ENCODE measurements at regions of chr15 and their contacts with region 1.

Region 1: DNA sequence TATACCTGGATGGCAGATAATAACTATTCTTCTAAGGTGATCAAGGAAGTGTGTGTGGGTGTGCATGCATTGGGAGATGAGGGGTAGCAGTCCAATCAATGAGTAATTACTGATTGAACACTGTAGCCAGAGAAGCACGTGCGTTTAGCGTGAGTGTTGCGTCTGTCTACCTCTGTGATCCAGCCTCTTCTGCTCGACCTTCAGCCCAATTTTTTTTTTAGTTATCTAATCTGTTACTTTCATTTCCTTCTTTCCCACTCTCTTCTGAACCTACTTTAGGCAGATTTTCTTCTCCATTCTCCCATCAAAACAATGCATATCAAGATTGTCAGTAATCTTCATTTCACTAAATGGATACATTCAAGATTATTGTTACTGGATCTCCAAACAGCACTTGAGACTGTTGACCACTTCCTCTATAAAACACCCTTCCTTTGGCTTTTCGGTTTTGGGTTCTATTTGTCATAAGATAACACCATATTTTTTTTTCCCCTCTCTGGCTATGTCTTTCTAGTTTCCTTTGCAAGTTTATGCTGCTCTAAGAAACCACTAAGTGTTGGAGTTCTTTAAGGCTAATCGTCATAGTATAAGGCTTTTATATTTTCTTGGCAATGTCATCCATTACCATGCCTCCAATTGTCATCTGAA is 41.0 kb downstream of the MCTP2 start:
- DNase-seq: no peak
- H3K4me3 Mint-ChIP-seq: no peak overlapping the region
- H3K27ac Mint-ChIP-seq: no peak overlapping the region
- H3K4me1 Mint-ChIP-seq: peaks cover 31% of the 10 kb centered on the region
- H3K27me3 Mint-ChIP-seq: no peaks in the 10 kb centered on the region

Region 2: DNA sequence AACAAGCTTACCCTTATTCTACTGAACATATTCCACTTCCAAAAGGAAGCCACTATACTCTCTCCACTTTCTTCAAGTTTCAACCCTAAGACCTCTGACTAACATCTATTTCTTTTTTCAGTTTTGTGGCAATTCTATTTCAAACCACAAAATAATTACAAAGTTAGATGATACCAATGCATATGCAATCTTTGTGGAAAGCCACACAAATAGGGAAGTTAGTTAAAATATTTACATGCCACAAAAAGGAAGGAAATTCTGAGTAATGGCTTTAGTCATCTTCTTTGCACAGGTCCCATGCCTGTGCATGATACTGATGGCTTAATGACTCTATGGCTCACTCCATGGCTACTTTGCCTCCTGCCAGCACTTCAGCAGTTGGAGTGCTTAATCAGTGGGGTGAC is 98.0 kb before region 1 on chr15:
- intact Hi-C with region 1: loop called (anchors 1 kb)
- DNase-seq: no peak
- H3K4me3 Mint-ChIP-seq: peak overlapping the region; percentile 0
- H3K27ac Mint-ChIP-seq: peak overlapping the region; percentile 28
- H3K4me1 Mint-ChIP-seq: peaks cover 54% of the 10 kb centered on the region
- H3K27me3 Mint-ChIP-seq: peaks cover 1% of the 10 kb centered on the region

Region 3: DNA sequence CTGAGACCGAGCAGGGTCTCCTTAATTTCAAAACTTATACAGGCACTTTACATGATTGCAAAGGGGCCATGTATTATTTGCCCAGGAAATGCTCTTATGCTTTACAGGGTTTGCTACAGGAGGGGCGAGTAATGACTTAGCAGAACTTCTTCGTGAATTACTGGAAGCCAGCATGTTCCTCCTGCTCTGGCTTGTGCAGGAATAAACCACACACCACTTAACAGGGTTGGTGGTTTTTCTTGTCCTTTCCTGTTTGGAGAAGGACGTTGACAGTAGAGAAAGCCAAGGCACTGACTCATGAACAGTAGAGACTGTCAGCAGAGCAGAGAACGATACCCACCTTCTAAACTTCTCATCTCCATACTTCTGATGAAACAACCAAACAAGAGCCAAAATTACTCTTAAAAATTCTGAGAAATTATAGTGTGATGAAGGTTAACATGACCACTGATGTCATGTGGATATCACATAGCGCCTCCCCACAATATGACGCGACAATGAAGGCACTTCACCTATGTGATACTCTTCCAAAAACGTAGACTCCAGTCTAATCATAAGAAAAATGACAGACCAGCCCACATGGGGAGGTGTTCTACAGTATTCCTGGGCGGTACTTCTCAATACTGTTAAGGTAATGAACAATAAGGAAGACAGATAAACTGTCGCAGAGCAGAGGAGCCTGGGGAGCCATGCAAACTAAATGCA is 65.8 kb before region 1 on chr15:
- intact Hi-C with region 1: loop called (anchors 2 kb)
- DNase-seq: peak; percentile 61
- H3K4me3 Mint-ChIP-seq: peak overlapping the region; percentile 60
- H3K27ac Mint-ChIP-seq: peak overlapping the region; percentile 96
- H3K4me1 Mint-ChIP-seq: peaks cover 40% of the 10 kb centered on the region
- H3K27me3 Mint-ChIP-seq: no peaks in the 10 kb centered on the region

Region 4: DNA sequence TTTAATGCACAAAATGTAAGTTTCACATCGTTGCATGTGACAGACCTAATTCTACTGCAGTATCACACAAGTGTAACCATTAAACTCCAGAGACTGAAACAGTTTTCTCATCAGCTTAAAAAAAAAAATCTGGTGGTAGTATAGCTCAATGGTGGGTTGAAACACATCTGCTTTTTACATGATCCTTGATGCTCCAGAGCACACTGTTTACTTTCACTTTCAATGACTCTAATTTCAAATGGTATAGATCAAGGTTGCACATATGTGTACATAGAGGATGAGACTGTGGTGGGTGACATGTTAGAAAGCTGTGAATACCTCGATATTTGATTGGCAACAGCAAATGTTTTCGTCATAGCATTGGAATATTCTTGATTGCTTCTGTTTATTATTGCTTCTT is 18.6 kb before region 1 on chr15:
- intact Hi-C with region 1: loop called (anchors 2 kb)
- DNase-seq: no peak
- H3K4me3 Mint-ChIP-seq: no peak overlapping the region
- H3K27ac Mint-ChIP-seq: no peak overlapping the region
- H3K4me1 Mint-ChIP-seq: peaks cover 54% of the 10 kb centered on the region
- H3K27me3 Mint-ChIP-seq: no peaks in the 10 kb centered on the region

Region 5: GRCh38 chr15:94287794-94288246 is 15.4 kb after region 1 on chr15:
- intact Hi-C with region 1: loop called (anchors 2 kb)
- DNase-seq: peak; percentile 60
- H3K4me3 Mint-ChIP-seq: peak overlapping the region; percentile 83
- H3K27ac Mint-ChIP-seq: peak overlapping the region; percentile 94
- H3K4me1 Mint-ChIP-seq: peaks cover 67% of the 10 kb centered on the region
- H3K27me3 Mint-ChIP-seq: no peaks in the 10 kb centered on the region